CD4-positive, alpha-beta memory T cell (primary cell): ENCODE measurements at regions of chr6 and their contacts with region 1.

Region 1: GRCh38 chr6:149484733-149485700 is at the start of gene ZC3H12D:
- DNase-seq: peak; percentile 83 to 96 (median 89)
- H3K4me3 ChIP-seq: peak within 1 kb of the TSS; percentile 76 to 82
- H3K4me3 Mint-ChIP-seq: peak within 1 kb of the TSS; percentile 90 to 98 (median 94)
- H3K27ac ChIP-seq: peak within 1 kb of the TSS; percentile 99
- H3K27ac Mint-ChIP-seq: peak within 1 kb of the TSS; percentile 98 to 100 (median 100)
- H3K4me1 ChIP-seq: peaks cover 32% of the 10 kb centered on the region
- H3K4me1 Mint-ChIP-seq: peaks cover 25 to 69% (median 38%) of the 10 kb centered on the region in 4 donors
- H3K27me3 ChIP-seq: no peaks in the 10 kb centered on the region
- H3K27me3 Mint-ChIP-seq: no peaks in the 10 kb centered on the region
- total RNA-seq, gene ZC3H12D: 91.5 to 106 TPM

Region 2: DNA sequence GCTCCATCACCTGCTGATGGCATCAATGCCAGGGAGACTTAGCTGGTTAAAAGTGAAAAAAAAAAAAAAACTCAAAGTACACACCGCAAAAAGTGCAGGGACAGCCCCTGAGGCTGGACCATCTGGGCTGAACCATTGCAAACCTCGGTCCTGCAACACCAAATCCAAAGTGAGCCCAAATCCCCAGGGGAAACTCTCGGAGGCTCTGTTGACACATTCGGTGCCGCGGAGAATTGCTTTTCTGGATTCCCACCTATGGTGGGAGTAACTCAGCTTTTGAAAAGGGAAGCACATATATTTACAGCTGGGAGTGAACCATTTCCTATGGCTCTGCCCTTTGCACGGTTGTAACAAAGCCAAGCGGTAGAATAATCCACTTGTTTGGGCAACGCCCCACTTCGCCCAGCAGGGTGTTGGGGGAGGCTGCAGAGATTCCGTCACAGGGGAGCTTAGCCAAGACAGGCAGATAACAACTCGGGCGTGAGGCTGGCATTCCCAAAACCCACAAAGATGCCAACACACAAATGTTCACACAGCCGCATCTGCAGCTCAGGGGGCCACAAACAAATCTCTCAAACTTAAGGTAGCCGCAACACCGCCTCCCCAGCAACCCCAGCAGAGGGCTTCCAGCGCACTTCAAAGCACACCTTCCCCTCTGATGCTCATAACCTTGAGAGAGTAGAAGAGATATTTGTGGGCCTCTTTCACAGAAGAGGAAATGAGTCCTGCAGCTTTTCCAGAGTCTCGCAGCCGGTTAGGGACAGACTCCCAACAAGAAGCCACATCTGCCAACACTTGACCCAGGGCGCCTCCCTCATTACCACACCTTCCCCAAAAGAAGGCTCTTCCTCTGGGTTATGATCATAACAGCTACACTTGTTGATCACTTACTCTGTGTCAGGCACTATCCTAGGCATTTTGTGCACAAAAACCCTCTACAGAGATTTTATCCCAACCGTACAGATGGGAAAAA is 11.7 kb before region 1 on chr6:
- CTCF ChIA-PET with region 1: interaction called, 5 read pairs
- POLR2A ChIA-PET with region 1: interaction called, 14 read pairs
- intact Hi-C with region 1: no loop called
- DNase-seq: peak in 4 of 5 donors; percentile 38 to 58 (median 48)
- H3K4me3 ChIP-seq: no peak overlapping the region
- H3K4me3 Mint-ChIP-seq: peak overlapping the region; percentile 59 to 83 (median 68)
- H3K27ac ChIP-seq: peak overlapping the region; percentile 40
- H3K27ac Mint-ChIP-seq: peak overlapping the region; percentile 84 to 92 (median 88)
- H3K4me1 ChIP-seq: peaks cover 93% of the 10 kb centered on the region
- H3K4me1 Mint-ChIP-seq: peaks cover 49 to 85% (median 71%) of the 10 kb centered on the region in 4 donors
- H3K27me3 ChIP-seq: no peaks in the 10 kb centered on the region
- H3K27me3 Mint-ChIP-seq: no peaks in the 10 kb centered on the region

Region 3: GRCh38 chr6:150220634-150221551 is 735.9 kb after region 1 on chr6:
- CTCF ChIA-PET with region 1: no interaction called
- POLR2A ChIA-PET with region 1: no interaction called
- intact Hi-C with region 1: no loop called
- DNase-seq: no peak
- H3K4me3 ChIP-seq: no peak overlapping the region
- H3K4me3 Mint-ChIP-seq: no peak overlapping the region
- H3K27ac ChIP-seq: no peak overlapping the region
- H3K27ac Mint-ChIP-seq: peak overlapping the region in 1 of 7 donors; percentile 6
- H3K4me1 ChIP-seq: no peaks in the 10 kb centered on the region
- H3K4me1 Mint-ChIP-seq: no peaks in the 10 kb centered on the region
- H3K27me3 ChIP-seq: no peaks in the 10 kb centered on the region
- H3K27me3 Mint-ChIP-seq: peaks cover 6 to 12% of the 10 kb centered on the region in 2 donors